ENCODE measurements at regions of chr21 and their contacts with region 1.

Region 1: GRCh38 chr21:33496345-33496744 is 4.8 kb upstream of the DNAJC28 start:
- DNase-seq: no peak
- H3K4me3 ChIP-seq: no peak overlapping the region
- H3K27ac ChIP-seq: no peak overlapping the region
- H3K4me1 ChIP-seq: peaks cover 0 to 6% (median 2%) of the 10 kb centered on the region in 4 donors
- H3K27me3 ChIP-seq: no peaks in the 10 kb centered on the region
- CTCF ChIP-seq: no peak

Region 2: GRCh38 chr21:33780631-33781030 is 284.3 kb after region 1 on chr21:
- intact Hi-C with region 1: loop called (anchors 5 kb)
- DNase-seq: no peak
- H3K4me3 ChIP-seq: no peak overlapping the region
- H3K27ac ChIP-seq: no peak overlapping the region
- H3K4me1 ChIP-seq: peaks cover 0 to 16% (median 0%) of the 10 kb centered on the region in 4 donors
- H3K27me3 ChIP-seq: no peaks in the 10 kb centered on the region
- CTCF ChIP-seq: no peak